HEK293 (cell line): ENCODE measurements at regions of chr1 and their contacts with region 1.

Region 1: GRCh38 chr1:94335950-94336349 is 82.2 kb upstream of the ABCD3 start:
- H3K4me3 ChIP-seq: no peak overlapping the region
- H3K27ac ChIP-seq: no peak overlapping the region
- H3K4me1 ChIP-seq: no peaks in the 10 kb centered on the region
- CTCF ChIP-seq: peak; percentile 78

Region 2: DNA sequence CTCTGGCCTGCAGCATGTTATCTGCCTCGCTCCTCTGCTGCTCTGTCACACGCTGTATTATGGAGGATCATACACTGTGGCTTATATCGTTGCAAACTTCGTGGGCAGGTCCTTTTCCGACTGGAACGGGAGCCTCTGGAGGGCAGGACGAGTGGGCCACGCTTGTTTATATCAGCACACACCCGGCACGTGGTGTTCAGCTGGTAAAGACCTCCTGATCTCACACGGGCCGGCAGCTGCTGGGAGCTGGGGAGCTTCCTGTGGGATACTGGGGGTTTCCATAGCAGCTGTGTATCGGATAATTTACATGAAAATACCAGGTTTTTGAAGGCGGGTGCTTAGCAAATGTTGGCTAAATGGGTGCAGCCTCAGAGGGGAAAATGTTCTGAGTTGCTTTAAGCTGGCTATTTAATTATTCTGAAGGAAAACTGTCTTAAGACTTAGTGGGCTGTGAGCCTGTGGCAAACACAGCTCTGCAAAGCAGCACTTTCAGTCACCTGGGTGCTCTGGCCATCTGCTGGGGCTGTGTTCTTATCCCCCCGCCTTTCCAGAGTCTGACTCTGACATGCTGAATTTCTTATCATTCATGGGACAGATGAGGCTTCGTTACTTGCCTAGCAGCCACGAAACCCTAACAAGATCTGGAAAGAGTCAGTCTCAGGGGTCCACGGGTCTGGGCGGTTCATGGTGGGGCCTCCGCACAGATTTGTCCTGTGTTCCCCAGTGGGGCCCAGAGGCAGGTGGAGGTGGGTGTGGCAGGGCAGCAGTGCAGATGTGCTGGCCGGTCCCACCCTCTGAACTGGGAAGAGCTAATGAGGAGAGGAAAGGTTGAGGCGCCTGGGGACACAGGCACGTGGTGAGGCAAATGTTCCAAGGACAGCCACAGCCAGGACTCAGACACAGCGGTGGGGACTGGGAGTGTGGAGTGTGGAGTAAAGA is 323.0 kb before region 1 on chr1:
- CTCF ChIA-PET with region 1: interaction called, 11 read pairs
- POLR2A ChIA-PET with region 1: no interaction called
- H3K4me3 ChIP-seq: no peak overlapping the region
- H3K27ac ChIP-seq: no peak overlapping the region
- H3K4me1 ChIP-seq: no peaks in the 10 kb centered on the region
- CTCF ChIP-seq: no peak

Region 3: DNA sequence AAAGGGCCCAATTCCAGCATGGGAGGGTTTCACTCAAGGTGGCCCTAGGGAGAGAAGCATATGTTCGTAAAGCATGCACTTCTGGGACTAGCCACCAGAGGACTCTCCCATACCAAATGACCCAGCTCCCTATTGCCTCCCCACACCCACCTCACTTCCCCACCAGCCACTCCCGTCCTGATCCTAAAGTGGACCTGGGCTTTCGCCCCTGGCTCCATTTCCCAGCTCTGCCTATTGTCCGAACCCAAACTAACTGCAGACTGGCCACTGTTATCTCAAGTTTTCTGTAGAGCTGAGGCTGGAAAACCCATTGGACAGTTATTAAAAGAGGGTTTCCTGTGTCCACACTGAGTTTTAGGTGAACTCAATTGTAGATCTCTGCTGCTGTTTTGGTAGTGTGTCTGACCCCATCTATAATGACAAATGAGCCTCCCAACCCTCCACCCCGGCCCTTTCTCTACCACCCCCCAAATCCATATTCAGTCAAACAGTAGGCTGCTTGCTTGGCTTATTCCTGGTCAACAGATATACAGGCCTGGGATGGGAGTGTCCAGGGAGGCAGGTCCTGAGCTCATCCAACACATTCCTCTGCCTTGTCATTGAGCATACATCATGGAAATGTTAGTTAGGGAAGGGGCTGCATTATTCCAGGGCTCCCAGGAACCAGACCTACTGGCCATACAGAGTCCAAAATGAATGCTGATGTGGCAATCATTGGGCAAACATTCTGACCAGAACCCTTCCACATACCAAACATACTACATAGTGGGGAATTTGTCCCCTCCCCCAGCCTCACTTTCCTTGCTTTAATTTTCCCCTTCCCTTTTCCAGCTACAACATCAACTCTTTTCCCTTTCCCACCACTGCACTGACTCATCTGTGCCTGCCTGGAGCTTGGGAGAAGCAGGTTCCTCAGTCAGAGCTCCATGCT is 274.2 kb before region 1 on chr1:
- CTCF ChIA-PET with region 1: interaction called, 389 read pairs
- POLR2A ChIA-PET with region 1: interaction called, 4 read pairs
- H3K4me3 ChIP-seq: no peak overlapping the region
- H3K27ac ChIP-seq: no peak overlapping the region
- H3K4me1 ChIP-seq: no peaks in the 10 kb centered on the region
- CTCF ChIP-seq: peak; percentile 88

Region 4: GRCh38 chr1:94228640-94229375 is 107.1 kb before region 1 on chr1:
- CTCF ChIA-PET with region 1: interaction called, 34 read pairs
- POLR2A ChIA-PET with region 1: no interaction called
- H3K4me3 ChIP-seq: no peak overlapping the region
- H3K27ac ChIP-seq: no peak overlapping the region
- H3K4me1 ChIP-seq: peaks cover 26% of the 10 kb centered on the region
- CTCF ChIP-seq: no peak

Region 5: DNA sequence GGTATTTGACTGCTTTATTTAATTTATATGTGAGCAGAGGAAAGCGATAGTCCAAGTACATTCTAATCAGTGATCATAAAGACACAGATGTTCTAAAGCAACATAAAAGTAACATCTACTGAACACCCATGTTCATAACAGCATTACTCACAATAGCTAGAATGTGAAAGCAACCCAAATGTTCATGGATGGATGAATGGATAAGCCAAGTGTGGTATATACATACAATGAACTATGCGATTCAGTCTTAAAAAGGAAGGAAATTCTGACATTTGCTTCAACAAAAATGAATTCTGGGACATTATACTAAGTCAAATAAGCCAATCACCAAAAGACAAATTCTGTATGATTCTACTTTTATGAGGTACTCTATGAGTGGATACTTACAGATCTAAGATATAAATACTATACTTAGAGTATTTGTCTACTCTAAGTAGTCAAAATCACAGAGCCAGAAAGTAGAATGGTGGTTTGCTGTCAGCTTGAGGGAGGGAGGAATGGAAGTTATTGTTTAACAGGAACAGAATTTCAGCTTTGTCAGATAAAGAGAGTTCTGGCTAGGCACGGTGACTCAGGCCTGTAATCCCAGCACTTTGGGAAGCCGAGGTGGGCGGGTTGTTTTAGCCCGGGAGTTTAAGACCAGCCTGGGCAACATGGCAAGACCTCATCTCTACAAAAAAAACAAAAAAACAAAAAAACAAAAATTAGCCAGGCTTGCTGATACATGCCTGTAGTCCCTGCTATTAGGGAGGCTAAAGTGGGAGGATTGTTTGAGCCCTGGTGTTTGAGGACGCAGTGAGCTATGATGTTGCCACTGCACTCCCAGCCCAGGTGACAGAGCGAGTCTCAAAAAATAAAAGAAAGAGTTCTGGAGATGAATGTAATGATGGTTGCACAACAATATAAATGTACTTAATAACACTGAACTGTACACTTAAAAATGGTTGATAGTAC is 18.8 kb before region 1 on chr1:
- CTCF ChIA-PET with region 1: interaction called, 22 read pairs
- POLR2A ChIA-PET with region 1: no interaction called
- H3K4me3 ChIP-seq: no peak overlapping the region
- H3K27ac ChIP-seq: no peak overlapping the region
- H3K4me1 ChIP-seq: peaks cover 3% of the 10 kb centered on the region; the same call in 1 of the 2 replicates
- CTCF ChIP-seq: no peak

Region 6: GRCh38 chr1:94622757-94623156 is 286.8 kb after region 1 on chr1:
- CTCF ChIA-PET with region 1: no interaction called
- POLR2A ChIA-PET with region 1: no interaction called
- H3K4me3 ChIP-seq: no peak overlapping the region
- H3K27ac ChIP-seq: no peak overlapping the region
- H3K4me1 ChIP-seq: no peaks in the 10 kb centered on the region
- CTCF ChIP-seq: no peak

Region 7: DNA sequence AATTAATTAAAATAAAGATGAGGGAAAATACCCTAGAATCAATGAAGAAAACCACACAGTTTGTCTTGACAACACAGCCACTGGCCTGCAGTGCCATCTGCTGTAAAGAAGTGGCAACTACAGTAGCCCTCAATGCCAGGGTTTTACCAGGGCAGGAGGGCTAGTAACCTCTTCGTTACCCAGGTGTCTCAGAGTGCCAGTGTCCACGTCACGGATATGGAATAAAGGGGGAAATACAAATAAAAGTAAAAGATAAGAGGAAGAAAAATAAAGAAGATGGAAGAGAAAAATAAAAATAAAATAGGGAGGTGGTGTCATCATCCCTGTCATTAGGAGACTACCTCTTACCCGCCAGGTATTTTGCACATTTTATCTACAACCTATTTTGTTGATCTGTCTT is 470.0 kb after region 1 on chr1:
- CTCF ChIA-PET with region 1: interaction called, 19 read pairs
- POLR2A ChIA-PET with region 1: no interaction called
- H3K4me3 ChIP-seq: no peak overlapping the region
- H3K27ac ChIP-seq: no peak overlapping the region
- H3K4me1 ChIP-seq: peaks cover 9% of the 10 kb centered on the region
- CTCF ChIP-seq: peak; percentile 75